Mammary epithelial cell (primary cell): ENCODE measurements at regions of chr7 and their contacts with region 1.

Region 1: GRCh38 chr7:13257661-13258060 is 570.2 kb downstream of the ARL4A start:
- DNase-seq: no peak
- H3K4me3 ChIP-seq: no peak overlapping the region
- H3K27ac ChIP-seq: no peak overlapping the region
- H3K4me1 ChIP-seq: no peaks in the 10 kb centered on the region
- H3K27me3 ChIP-seq: no peaks in the 10 kb centered on the region
- CTCF ChIP-seq: no peak

Region 2: GRCh38 chr7:12647364-12648219 is 610.1 kb before region 1 on chr7:
- CTCF ChIA-PET with region 1: no interaction called
- dilution Hi-C with region 1: no loop called
- in situ Hi-C with region 1: loop called in 1 of 2 experiments (anchors 10 kb)
- intact Hi-C with region 1: no loop called
- DNase-seq: peak; percentile 56
- H3K4me3 ChIP-seq: no peak overlapping the region
- H3K27ac ChIP-seq: no peak overlapping the region
- H3K4me1 ChIP-seq: peaks cover 8% of the 10 kb centered on the region
- H3K27me3 ChIP-seq: no peaks in the 10 kb centered on the region
- CTCF ChIP-seq: no peak